ENCODE measurements at regions of chr17 and their contacts with region 1.

Region 1: DNA sequence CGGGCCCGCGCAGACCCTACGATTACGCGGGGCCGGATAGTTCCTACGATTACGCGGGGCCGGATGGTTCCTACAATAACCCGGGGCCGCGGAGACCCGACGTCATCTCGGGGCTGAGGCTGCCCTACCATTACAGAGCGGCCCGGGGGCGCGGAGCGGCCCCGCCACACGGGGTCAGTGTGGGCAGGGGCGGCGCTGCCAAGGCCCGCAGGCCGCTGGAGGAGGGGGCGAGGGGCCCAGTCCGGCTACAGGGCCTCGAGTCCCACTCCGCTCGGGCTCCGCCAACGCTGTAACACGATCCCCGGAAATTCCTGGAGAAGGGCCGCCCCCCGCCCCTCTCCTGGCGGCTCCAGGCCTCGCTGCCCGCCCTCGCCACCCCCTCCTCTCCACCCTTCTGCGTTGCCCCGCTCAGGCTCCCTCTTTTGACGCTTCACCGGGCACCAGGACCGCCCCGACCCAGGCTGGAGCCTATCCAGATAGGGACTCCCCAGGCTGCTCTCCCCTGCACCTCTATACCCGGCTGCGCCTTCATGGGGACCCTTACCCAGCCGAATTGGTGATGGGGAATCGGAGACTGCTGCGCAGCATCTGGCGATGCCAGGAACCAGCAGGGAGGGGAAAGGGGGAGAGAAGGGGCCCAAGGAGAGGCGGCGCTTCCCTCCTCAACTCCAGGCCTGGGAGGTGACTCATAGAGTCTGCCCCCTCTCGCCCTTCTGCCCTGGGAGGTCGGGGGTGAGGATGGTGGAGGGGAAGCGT is at the start of gene RAB34:
- DNase-seq: no peak
- ATAC-seq: no peak
- H3K4me3 ChIP-seq: no peak within 1 kb of the TSS
- H3K27ac ChIP-seq: no peak within 1 kb of the TSS
- H3K4me1 ChIP-seq: peaks cover 44% of the 10 kb centered on the region
- H3K27me3 ChIP-seq: peaks cover 2 to 3% of the 10 kb centered on the region in 2 experiments; a peak in 3 of 5 replicates
- CTCF ChIP-seq: no peak
- EP300 ChIP-seq: no peak
- POLR2A ChIP-seq: no peak
- RAD21 ChIP-seq: no peak
- total RNA-seq, gene RAB34: 0.49 TPM in 1 of 2 replicates, not detected in the other

Region 2: GRCh38 chr17:28398280-28398981 is 319.3 kb before region 1 on chr17:
- CTCF ChIA-PET with region 1: no interaction called
- POLR2A ChIA-PET with region 1: no interaction called
- in situ Hi-C with region 1: no loop called
- intact Hi-C with region 1: no loop called
- DNase-seq: peak; percentile 8
- ATAC-seq: peak; percentile 73
- H3K4me3 ChIP-seq: no peak overlapping the region
- H3K27ac ChIP-seq: peak overlapping the region; percentile 31
- H3K4me1 ChIP-seq: peaks cover 40% of the 10 kb centered on the region
- H3K27me3 ChIP-seq: no peaks in the 10 kb centered on the region
- CTCF ChIP-seq: no peak
- EP300 ChIP-seq: no peak
- POLR2A ChIP-seq: no peak
- RAD21 ChIP-seq: no peak

Region 3: GRCh38 chr17:28644985-28645939 is 72.5 kb before region 1 on chr17 and contains the start of gene BLTP2:
- CTCF ChIA-PET with region 1: no interaction called
- POLR2A ChIA-PET with region 1: interaction called, 53 read pairs
- in situ Hi-C with region 1: loop called (anchors 5 kb)
- intact Hi-C with region 1: loop called (anchors 5 kb)
- DNase-seq: peak; percentile 85
- ATAC-seq: peak; percentile 97
- H3K4me3 ChIP-seq: peak within 1 kb of the TSS; percentile 84 to 95 (median 92)
- H3K27ac ChIP-seq: peak within 1 kb of the TSS; percentile 68
- H3K4me1 ChIP-seq: peaks cover 54% of the 10 kb centered on the region
- H3K27me3 ChIP-seq: no peaks in the 10 kb centered on the region; a peak in 1 of 5 replicates
- CTCF ChIP-seq: peak; percentile 23; the same call in 1 of the 2 replicates
- EP300 ChIP-seq: no peak
- POLR2A ChIP-seq: peak; percentile 61 to 87
- RAD21 ChIP-seq: no peak; the same call in 1 of the 2 replicates
- total RNA-seq, gene BLTP2: 61.0 and 66.7 TPM in 2 replicates

Region 4: GRCh38 chr17:28684963-28685362 is 32.8 kb before region 1 on chr17:
- CTCF ChIA-PET with region 1: interaction called, 4 read pairs
- POLR2A ChIA-PET with region 1: interaction called, 13 read pairs
- in situ Hi-C with region 1: no loop called
- intact Hi-C with region 1: no loop called
- DNase-seq: peak; percentile 65
- ATAC-seq: peak; percentile 68
- H3K4me3 ChIP-seq: no peak overlapping the region
- H3K27ac ChIP-seq: no peak overlapping the region
- H3K4me1 ChIP-seq: 0 out of 2 replicates have a peak, but pooled peaks cover 7% of the 10 kb centered on the region
- H3K27me3 ChIP-seq: no peaks in the 10 kb centered on the region
- CTCF ChIP-seq: peak; percentile 79
- EP300 ChIP-seq: no peak
- POLR2A ChIP-seq: no peak
- RAD21 ChIP-seq: 0 out of 2 replicates have a peak, but pooled peaks have one; percentile 38

Region 5: GRCh38 chr17:28743225-28744103 is 25.7 kb after region 1 on chr17 and contains the start of gene TRAF4:
- CTCF ChIA-PET with region 1: no interaction called
- POLR2A ChIA-PET with region 1: interaction called, 92 read pairs
- in situ Hi-C with region 1: no loop called
- intact Hi-C with region 1: no loop called
- DNase-seq: peak; percentile 73
- ATAC-seq: peak; percentile 64
- H3K4me3 ChIP-seq: peak within 1 kb of the TSS; percentile 72 to 93 (median 74)
- H3K27ac ChIP-seq: peak within 1 kb of the TSS; percentile 95
- H3K4me1 ChIP-seq: peaks cover 49% of the 10 kb centered on the region
- H3K27me3 ChIP-seq: no peaks in the 10 kb centered on the region; a peak in 1 of 5 replicates
- CTCF ChIP-seq: no peak
- EP300 ChIP-seq: no peak
- POLR2A ChIP-seq: peak in 1 of 2 experiments; percentile 92; a peak in 3 of 4 replicates
- RAD21 ChIP-seq: peak; percentile 70
- total RNA-seq, gene TRAF4: 56.6 and 89.9 TPM in 2 replicates

Region 6: GRCh38 chr17:28842282-28843012 is 124.7 kb after region 1 on chr17 and contains the start of gene FAM222B:
- CTCF ChIA-PET with region 1: no interaction called
- POLR2A ChIA-PET with region 1: interaction called, 10 read pairs
- in situ Hi-C with region 1: no loop called
- intact Hi-C with region 1: no loop called
- DNase-seq: peak; percentile 79
- ATAC-seq: peak; percentile 98
- H3K4me3 ChIP-seq: peak within 1 kb of the TSS; percentile 73 to 92 (median 74)
- H3K27ac ChIP-seq: peak within 1 kb of the TSS; percentile 59
- H3K4me1 ChIP-seq: peaks cover 20% of the 10 kb centered on the region
- H3K27me3 ChIP-seq: no peaks in the 10 kb centered on the region; a peak in 1 of 5 replicates
- CTCF ChIP-seq: no peak
- EP300 ChIP-seq: no peak
- POLR2A ChIP-seq: peak; percentile 58 to 79
- RAD21 ChIP-seq: no peak
- total RNA-seq, gene FAM222B: 3.5 and 4.7 TPM in 2 replicates

Measured in HepG2 (cell line).